ENCODE measurements at regions of chr18 and their contacts with region 1.

Region 1: GRCh38 chr18:26017929-26018328 is 72.5 kb downstream of the SS18 start:
- DNase-seq: no peak
- ATAC-seq: no peak
- H3K4me3 ChIP-seq: no peak overlapping the region
- H3K4me3 Mint-ChIP-seq: no peak overlapping the region
- H3K27ac ChIP-seq: no peak overlapping the region
- H3K27ac Mint-ChIP-seq: no peak overlapping the region
- H3K4me1 ChIP-seq: no peaks in the 10 kb centered on the region
- H3K4me1 Mint-ChIP-seq: peaks cover 3% of the 10 kb centered on the region
- H3K27me3 ChIP-seq: no peaks in the 10 kb centered on the region
- H3K27me3 Mint-ChIP-seq: no peaks in the 10 kb centered on the region
- CTCF ChIP-seq: no peak

Region 2: GRCh38 chr18:26034850-26035497 is 17.0 kb after region 1 on chr18:
- CTCF ChIA-PET with region 1: no interaction called
- POLR2A ChIA-PET with region 1: no interaction called
- intact Hi-C with region 1: loop called (anchors 1 kb)
- DNase-seq: no peak
- ATAC-seq: no peak
- H3K4me3 ChIP-seq: no peak overlapping the region
- H3K4me3 Mint-ChIP-seq: no peak overlapping the region
- H3K27ac ChIP-seq: no peak overlapping the region
- H3K27ac Mint-ChIP-seq: no peak overlapping the region
- H3K4me1 ChIP-seq: no peaks in the 10 kb centered on the region
- H3K4me1 Mint-ChIP-seq: no peaks in the 10 kb centered on the region
- H3K27me3 ChIP-seq: no peaks in the 10 kb centered on the region
- H3K27me3 Mint-ChIP-seq: no peaks in the 10 kb centered on the region
- CTCF ChIP-seq: no peak